ENCODE measurements at regions of chr10 and their contacts with region 1.

Region 1: DNA sequence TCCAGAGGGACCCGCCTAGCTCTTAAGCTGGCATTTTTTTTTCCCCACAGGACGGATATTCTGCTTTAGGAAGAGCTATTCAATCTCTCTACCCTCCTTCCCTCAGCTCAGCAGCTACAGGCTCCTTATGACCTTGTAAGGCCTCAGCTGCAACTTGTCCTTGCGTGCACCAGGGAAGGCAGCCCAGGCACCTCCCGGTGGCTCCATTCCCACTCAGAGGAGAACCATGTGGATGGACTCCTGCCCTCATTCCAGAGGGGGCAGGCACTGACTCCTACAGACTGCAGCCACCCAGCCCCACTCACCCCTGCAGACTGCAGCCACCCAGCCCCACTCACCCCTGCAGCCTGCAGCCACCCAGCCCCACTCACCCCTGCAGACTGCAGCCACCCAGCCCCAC is 73.7 kb downstream of the ITIH5 start:
- DNase-seq: no peak

Region 2: DNA sequence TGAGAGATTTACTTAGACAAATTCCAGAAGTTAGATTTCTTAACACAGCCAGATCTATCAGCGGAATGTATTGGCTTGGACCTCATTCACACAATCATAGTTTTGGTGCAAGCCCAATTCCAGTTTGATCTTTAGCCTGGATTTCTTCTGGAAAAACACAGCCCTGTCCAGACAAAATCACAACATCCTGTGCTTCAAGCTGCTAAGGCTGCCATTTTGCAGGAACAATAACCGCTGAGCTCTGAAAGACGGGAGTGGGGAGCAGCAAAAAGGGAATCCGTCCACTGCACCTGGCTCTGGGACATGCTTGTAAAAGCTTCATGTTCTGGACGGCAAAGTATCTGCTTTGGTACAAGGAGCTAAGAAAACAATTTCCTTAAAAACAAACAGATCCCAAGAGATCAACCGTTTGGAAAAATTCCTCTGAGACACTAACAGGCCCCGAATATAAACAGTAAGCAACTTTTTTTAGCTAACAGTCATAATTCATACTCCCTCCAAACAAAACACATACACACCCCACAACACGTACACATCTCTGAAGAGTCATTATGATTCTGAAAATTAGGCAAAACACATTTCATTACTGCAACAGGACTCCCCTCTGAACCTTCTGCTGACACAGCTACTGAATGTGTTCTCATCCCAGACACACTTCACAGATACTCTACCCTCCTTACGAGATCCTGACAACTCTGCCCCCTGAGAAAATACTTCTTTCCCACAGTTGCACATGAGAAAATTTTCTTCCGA is 41.3 kb after region 1 on chr10:
- intact Hi-C with region 1: loop called in 1 of 2 experiments (anchors 1 kb)
- DNase-seq: no peak

Region 3: GRCh38 chr10:7687228-7687907 is 94.3 kb after region 1 on chr10:
- intact Hi-C with region 1: no loop called
- DNase-seq: peak; percentile 92

Region 4: GRCh38 chr10:8738987-8739386 is 1145.9 kb after region 1 on chr10:
- intact Hi-C with region 1: no loop called
- DNase-seq: no peak